GM12878 (cell line): ENCODE measurements at regions of chr1 and their contacts with region 1.

Region 1: GRCh38 chr1:87279966-87280535 is 48.6 kb upstream of the LMO4 start:
- DNase-seq: no peak
- ATAC-seq: peak; percentile 52; the same call in 2 of the 3 replicates
- H3K4me3 ChIP-seq: no peak overlapping the region
- H3K27ac ChIP-seq: no peak overlapping the region
- H3K4me1 ChIP-seq: no peaks in the 10 kb centered on the region
- H3K27me3 ChIP-seq: 0 out of 4 replicates have a peak, but pooled peaks cover 0 to 2% of the 10 kb centered on the region in 2 experiments
- CTCF ChIP-seq: peak; percentile 16 to 34 (median 20); a peak in 2 of 6 replicates
- EP300 ChIP-seq: no peak
- POLR2A ChIP-seq: no peak
- RAD21 ChIP-seq: no peak

Region 2: GRCh38 chr1:87084244-87084836 is 195.7 kb before region 1 on chr1:
- CTCF ChIA-PET with region 1: no interaction called
- POLR2A ChIA-PET with region 1: no interaction called
- RAD21 ChIA-PET with region 1: no interaction called
- SMC1A ChIA-PET with region 1: no interaction called
- in situ Hi-C with region 1: no loop called
- intact Hi-C with region 1: no loop called
- DNase-seq: no peak
- ATAC-seq: peak; percentile 83
- H3K4me3 ChIP-seq: no peak overlapping the region
- H3K27ac ChIP-seq: no peak overlapping the region; the same call in 1 of the 2 replicates
- H3K4me1 ChIP-seq: peaks cover 3% of the 10 kb centered on the region; the same call in 1 of the 2 replicates
- H3K27me3 ChIP-seq: no peaks in the 10 kb centered on the region
- CTCF ChIP-seq: peak in 2 of 3 experiments; percentile 27 to 34; a peak in 2 of 6 replicates
- EP300 ChIP-seq: no peak
- POLR2A ChIP-seq: no peak
- RAD21 ChIP-seq: peak; percentile 66

Region 3: DNA sequence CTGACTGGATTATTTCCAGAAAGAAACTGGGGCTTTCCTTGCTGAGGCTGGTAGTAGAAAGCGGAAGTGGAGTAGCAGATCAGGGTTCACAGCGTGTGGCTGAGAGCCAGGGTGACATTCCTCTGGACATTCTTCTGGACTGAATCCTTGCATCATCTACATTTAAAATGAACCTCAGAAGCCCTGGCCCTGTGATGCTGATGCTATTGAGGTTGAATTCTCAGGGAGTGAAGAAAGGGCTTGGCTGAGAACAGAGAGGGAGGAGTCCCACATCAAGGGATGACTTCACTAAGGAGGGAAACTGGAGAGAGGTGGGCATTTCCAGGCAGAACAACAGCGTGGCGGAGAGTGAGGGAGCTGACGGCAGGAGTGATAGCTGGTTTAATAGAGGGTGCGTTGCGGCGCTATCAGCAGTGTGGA is 53.7 kb before region 1 on chr1:
- CTCF ChIA-PET with region 1: no interaction called
- POLR2A ChIA-PET with region 1: interaction called, 3 read pairs
- RAD21 ChIA-PET with region 1: no interaction called
- SMC1A ChIA-PET with region 1: no interaction called
- in situ Hi-C with region 1: no loop called
- intact Hi-C with region 1: loop called (anchors 5 kb)
- DNase-seq: no peak
- ATAC-seq: peak; percentile 71
- H3K4me3 ChIP-seq: no peak overlapping the region
- H3K27ac ChIP-seq: no peak overlapping the region
- H3K4me1 ChIP-seq: peaks cover 7% of the 10 kb centered on the region; the same call in 1 of the 2 replicates
- H3K27me3 ChIP-seq: no peaks in the 10 kb centered on the region
- CTCF ChIP-seq: no peak
- EP300 ChIP-seq: no peak
- POLR2A ChIP-seq: no peak
- RAD21 ChIP-seq: no peak